H1 (cell line): ENCODE measurements at regions of chr17 and their contacts with region 1.

Region 1: GRCh38 chr17:45971698-45972141 is 27.3 kb upstream of the STH start:
- DNase-seq: peak in 1 of 2 experiments; percentile 77
- H3K4me3 ChIP-seq: peak overlapping the region in 1 of 4 experiments; percentile 37; a peak in 1 of 8 replicates
- H3K27ac ChIP-seq: no peak overlapping the region
- H3K4me1 ChIP-seq: peaks cover 0 to 3% (median 0%) of the 10 kb centered on the region in 4 experiments; a peak in 1 of 7 replicates
- H3K27me3 ChIP-seq: peaks cover 0 to 5% (median 0%) of the 10 kb centered on the region in 4 experiments; a peak in 3 of 7 replicates
- CTCF ChIP-seq: peak; percentile 62 to 70 (median 66)
- EP300 ChIP-seq: no peak
- POLR2A ChIP-seq: no peak
- RAD21 ChIP-seq: peak; percentile 12 to 52

Region 2: DNA sequence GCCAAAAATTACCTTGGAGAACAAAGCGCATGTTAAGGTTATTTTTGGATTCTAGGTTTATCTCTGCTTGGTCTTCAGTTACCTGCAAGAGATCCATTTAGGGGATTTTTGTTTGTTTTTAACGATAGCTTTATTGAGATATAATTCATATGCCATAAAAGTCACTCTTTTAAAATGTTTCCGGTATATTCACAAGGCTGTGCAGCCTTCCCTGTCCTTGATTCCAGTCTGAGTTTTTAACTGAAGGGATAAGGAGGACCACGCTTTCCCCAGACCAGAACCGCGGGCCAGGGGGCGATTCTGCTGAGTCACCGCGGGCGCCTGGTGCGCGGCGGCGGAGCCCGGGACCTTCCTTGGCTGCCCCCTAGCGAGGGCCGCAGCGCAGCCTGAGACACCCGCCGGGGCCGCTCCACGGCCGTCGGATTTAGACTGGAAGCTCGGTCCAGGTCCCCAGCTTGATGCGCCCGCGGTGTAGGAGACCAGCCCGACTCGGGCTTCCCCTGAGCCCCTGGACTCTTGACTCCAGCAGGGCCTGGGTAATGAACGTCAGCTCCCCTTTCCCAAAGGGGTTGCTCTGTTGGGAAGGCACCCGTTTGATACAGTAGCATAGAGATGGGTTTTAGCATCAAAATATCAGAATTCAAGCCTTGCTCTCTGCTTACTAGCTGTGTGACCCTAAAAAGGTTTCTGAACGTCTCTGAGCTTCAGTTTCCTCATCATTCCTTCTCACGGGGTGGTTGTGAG is 22.7 kb before region 1 on chr17:
- CTCF ChIA-PET with region 1: interaction called, 28 read pairs
- POLR2A ChIA-PET with region 1: interaction called, 3 read pairs
- DNase-seq: peak; percentile 39 to 84
- H3K4me3 ChIP-seq: peak overlapping the region in 2 of 4 experiments; percentile 15 to 45; a peak in 3 of 8 replicates
- H3K27ac ChIP-seq: no peak overlapping the region
- H3K4me1 ChIP-seq: peaks cover 0 to 6% (median 2%) of the 10 kb centered on the region in 4 experiments; a peak in 4 of 7 replicates
- H3K27me3 ChIP-seq: peaks cover 0 to 12% (median 11%) of the 10 kb centered on the region in 4 experiments; a peak in 6 of 7 replicates
- CTCF ChIP-seq: peak; percentile 62 to 79 (median 65)
- EP300 ChIP-seq: peak in 1 of 2 experiments; percentile 21; a peak in 1 of 3 replicates
- POLR2A ChIP-seq: no peak
- RAD21 ChIP-seq: peak; percentile 55 to 67

Region 3: GRCh38 chr17:45954914-45955313 is 16.8 kb before region 1 on chr17:
- CTCF ChIA-PET with region 1: interaction called, 31 read pairs
- POLR2A ChIA-PET with region 1: no interaction called
- DNase-seq: no peak
- H3K4me3 ChIP-seq: no peak overlapping the region
- H3K27ac ChIP-seq: no peak overlapping the region
- H3K4me1 ChIP-seq: peaks cover 0 to 6% (median under 1%) of the 10 kb centered on the region in 4 experiments; a peak in 2 of 7 replicates
- H3K27me3 ChIP-seq: peaks cover 0 to 4% (median 3%) of the 10 kb centered on the region in 4 experiments; a peak in 6 of 7 replicates
- CTCF ChIP-seq: no peak
- EP300 ChIP-seq: no peak
- POLR2A ChIP-seq: no peak
- RAD21 ChIP-seq: no peak

Region 4: GRCh38 chr17:45982791-45983613 is 11.3 kb after region 1 on chr17:
- CTCF ChIA-PET with region 1: interaction called, 11 read pairs
- POLR2A ChIA-PET with region 1: interaction called, 3 read pairs
- DNase-seq: no peak
- H3K4me3 ChIP-seq: no peak overlapping the region
- H3K27ac ChIP-seq: no peak overlapping the region
- H3K4me1 ChIP-seq: peaks cover 0 to 10% (median 5%) of the 10 kb centered on the region in 4 experiments; a peak in 4 of 7 replicates
- H3K27me3 ChIP-seq: no peaks in the 10 kb centered on the region; a peak in 1 of 7 replicates
- CTCF ChIP-seq: no peak
- EP300 ChIP-seq: no peak
- POLR2A ChIP-seq: no peak
- RAD21 ChIP-seq: no peak

Region 5: DNA sequence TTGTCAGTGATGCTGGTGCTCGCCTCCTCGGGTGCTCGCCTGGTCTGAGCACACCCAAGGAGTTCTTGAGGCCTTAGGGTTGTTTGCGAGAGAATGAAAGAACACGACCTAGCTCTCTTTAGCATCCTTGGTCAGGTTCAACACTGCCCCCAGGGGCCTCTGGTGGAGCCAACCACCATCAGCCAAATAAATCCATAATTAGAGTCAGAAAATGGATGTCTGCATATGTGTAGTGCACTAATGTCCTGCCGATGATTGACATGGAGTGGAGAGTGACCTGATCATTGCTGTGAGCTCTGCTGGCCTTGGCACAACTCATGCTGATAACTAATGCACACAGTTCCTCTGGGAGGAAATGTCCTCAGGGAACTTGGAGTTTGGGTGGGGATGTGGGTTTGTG is 19.2 kb after region 1 on chr17:
- CTCF ChIA-PET with region 1: interaction called, 11 read pairs
- POLR2A ChIA-PET with region 1: no interaction called
- DNase-seq: no peak
- H3K4me3 ChIP-seq: no peak overlapping the region
- H3K27ac ChIP-seq: no peak overlapping the region
- H3K4me1 ChIP-seq: peaks cover 0 to 9% (median 4%) of the 10 kb centered on the region in 4 experiments; a peak in 5 of 7 replicates
- H3K27me3 ChIP-seq: peaks cover 0 to 2% (median 0%) of the 10 kb centered on the region in 4 experiments; a peak in 1 of 7 replicates
- CTCF ChIP-seq: peak in 1 of 3 experiments; percentile 32; a peak in 1 of 4 replicates
- EP300 ChIP-seq: no peak
- POLR2A ChIP-seq: no peak
- RAD21 ChIP-seq: no peak